HEK293 (cell line): ENCODE measurements at regions of chr10 and their contacts with region 1.

Region 1: GRCh38 chr10:128150045-128150493 is 23.8 kb upstream of the MKI67 start:
- H3K4me3 ChIP-seq: peak overlapping the region; percentile 46
- H3K27ac ChIP-seq: no peak overlapping the region
- H3K4me1 ChIP-seq: no peaks in the 10 kb centered on the region
- CTCF ChIP-seq: peak; percentile 90

Region 2: GRCh38 chr10:128077161-128077875 is 72.8 kb before region 1 on chr10:
- CTCF ChIA-PET with region 1: interaction called, 11 read pairs
- POLR2A ChIA-PET with region 1: interaction called, 3 read pairs
- H3K4me3 ChIP-seq: no peak overlapping the region
- H3K27ac ChIP-seq: no peak overlapping the region
- H3K4me1 ChIP-seq: no peaks in the 10 kb centered on the region
- CTCF ChIP-seq: no peak

Region 3: DNA sequence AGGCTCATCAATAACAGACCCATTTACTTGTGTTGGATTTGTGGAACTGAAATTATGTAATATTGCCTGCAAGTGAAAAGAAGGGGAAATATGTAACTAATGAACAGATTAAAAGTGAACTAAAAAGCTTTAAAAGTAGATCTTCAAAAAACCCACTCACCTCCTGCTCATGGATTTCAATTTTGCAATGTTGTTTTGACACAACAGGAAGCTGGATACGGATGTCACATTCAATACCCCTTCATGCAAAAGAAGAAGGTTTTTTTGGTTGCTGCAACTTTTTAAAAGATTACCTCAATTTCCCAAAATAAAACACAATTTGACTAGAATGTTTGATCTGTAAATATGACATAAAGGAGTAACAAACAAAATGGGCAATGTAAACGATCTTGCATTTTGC is 27.1 kb before region 1 on chr10:
- CTCF ChIA-PET with region 1: interaction called, 19 read pairs
- POLR2A ChIA-PET with region 1: no interaction called
- H3K4me3 ChIP-seq: no peak overlapping the region
- H3K27ac ChIP-seq: no peak overlapping the region
- H3K4me1 ChIP-seq: peaks cover 11% of the 10 kb centered on the region
- CTCF ChIP-seq: no peak

Region 4: DNA sequence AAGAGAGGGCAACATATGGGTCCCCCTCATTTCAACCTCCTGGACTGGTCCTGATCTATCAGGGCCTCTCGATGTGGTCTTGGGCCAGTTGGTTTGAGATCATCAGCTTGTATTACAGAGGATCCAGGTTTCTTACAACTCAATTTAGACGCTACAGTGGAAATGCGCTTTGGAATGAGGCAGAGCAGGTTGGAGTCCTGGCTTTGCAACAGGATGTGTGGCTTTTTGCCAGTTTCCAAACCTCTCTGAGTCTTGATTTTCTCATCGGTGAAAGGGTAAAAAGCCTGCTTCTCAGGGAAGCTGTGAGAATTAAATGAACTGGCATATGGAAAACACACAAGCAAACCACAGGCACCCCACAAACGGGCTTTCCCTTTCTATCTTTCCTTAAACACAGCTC is 13.6 kb after region 1 on chr10:
- CTCF ChIA-PET with region 1: interaction called, 11 read pairs
- POLR2A ChIA-PET with region 1: no interaction called
- H3K4me3 ChIP-seq: no peak overlapping the region
- H3K27ac ChIP-seq: no peak overlapping the region
- H3K4me1 ChIP-seq: no peaks in the 10 kb centered on the region
- CTCF ChIP-seq: no peak

Region 5: GRCh38 chr10:128178319-128178958 is 28.4 kb after region 1 on chr10:
- CTCF ChIA-PET with region 1: interaction called, 10 read pairs
- POLR2A ChIA-PET with region 1: no interaction called
- H3K4me3 ChIP-seq: no peak overlapping the region
- H3K27ac ChIP-seq: no peak overlapping the region
- H3K4me1 ChIP-seq: no peaks in the 10 kb centered on the region
- CTCF ChIP-seq: no peak